Posterior cingulate gyrus (tissue), 11 donors: ENCODE measurements at regions of chr1 and their contacts with region 1.

Region 1: DNA sequence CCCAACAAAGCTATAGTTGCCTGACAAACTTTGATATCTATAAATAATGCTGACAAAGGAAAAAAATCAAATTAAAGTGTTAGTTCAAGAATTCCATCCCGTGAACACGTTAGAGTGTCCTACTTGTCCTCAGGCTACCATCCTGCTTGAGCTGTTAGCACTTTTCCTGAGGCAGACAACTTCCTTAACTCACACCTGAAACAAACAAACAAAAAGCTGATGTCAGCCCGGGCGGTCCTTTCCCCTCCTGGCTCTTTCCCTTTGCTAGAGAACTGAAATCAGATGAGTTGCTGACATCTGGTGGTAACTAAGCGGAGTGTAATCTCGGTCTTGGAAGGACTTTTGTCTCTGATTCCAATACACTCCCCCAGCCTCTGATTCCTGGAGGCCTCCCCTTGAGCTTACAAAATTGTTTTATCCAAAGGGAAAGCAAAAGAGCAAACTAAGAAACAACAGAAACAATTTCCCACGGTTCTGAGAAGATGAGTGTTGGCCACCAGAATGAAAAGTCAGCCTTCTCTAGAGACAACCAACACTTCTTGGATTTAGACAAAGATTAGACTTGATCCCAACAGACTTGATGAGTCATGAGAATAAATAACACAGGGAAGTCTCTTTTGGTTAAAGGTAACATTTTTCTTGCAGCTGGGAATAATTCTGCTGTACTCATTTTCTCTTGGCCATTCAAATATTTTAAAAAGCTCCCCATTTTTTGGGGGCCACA is 135.4 kb downstream of the PROX1 start:
- DNase-seq: peak in 6 of 10 donors; percentile 21 to 90 (median 30)

Region 2: DNA sequence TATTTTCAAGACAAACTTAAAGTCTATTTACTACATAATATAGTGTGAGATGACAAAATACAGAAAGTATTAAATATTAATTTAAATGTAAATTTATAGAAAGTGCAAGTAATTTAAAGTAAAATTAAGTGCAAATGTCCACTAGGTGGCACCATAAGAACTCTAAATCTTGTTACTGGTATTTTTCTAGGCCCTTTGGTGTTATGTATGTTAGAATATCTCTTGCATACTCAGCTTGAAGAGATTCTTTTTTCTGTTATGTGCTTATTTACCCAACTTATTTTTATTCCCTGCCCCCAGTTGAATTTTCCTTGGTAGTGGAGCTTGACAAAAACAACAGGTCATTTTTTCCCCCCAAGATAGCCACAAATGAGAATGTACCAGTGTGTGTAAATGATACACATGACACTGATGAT is 1000.7 kb before region 1 on chr1:
- intact Hi-C with region 1: loop called (anchors 1 kb)
- DNase-seq: no peak

Region 3: GRCh38 chr1:213244664-213245091 is 878.5 kb before region 1 on chr1:
- intact Hi-C with region 1: loop called (anchors 1 kb)
- DNase-seq: peak in 2 of 10 donors; percentile 11 to 32

Region 4: DNA sequence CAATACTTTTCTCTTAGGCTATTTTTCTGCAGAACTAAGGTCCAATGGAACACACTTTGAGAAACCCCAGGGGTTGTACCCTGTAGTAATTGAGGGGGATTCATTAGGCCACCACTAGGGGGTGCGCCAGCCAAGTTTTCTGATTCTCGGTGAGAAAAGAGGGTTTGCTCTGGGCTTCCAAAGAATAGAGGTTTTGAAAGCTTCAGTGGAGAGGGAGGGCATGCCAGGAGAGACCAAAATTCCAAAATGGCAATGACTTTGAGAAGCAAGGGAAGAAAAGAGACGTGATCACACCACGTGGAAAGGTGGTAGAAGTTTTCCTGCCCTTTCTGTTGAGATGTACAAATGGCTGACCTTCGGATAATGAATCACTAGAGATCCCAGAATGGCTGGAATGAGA is 748.9 kb before region 1 on chr1:
- intact Hi-C with region 1: loop called (anchors 1 kb)
- DNase-seq: peak; percentile 43 to 95 (median 74)

Region 5: GRCh38 chr1:213564215-213564659 is 559.0 kb before region 1 on chr1:
- intact Hi-C with region 1: loop called (anchors 10 kb)
- DNase-seq: no peak

Region 6: DNA sequence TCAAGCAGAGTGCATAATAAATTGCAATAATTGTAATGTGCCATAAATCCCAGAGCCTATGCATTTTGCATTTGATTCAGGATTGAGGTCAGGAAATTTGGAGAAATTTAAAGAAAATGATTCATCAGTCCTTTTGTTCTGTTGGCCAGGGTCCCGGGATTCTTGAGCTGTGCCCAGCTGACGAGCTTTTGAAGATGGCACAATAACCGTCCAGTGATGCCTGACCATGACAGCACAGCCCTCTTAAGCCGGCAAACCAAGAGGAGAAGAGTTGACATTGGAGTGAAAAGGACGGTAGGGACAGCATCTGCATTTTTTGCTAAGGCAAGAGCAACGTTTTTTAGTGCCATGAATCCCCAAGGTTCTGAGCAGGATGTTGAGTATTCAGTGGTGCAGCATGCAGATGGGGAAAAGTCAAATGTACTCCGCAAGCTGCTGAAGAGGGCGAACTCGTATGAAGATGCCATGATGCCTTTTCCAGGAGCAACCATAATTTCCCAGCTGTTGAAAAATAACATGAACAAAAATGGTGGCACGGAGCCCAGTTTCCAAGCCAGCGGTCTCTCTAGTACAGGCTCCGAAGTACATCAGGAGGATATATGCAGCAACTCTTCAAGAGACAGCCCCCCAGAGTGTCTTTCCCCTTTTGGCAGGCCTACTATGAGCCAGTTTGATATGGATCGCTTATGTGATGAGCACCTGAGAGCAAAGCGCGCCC is 126.7 kb before region 1 on chr1:
- intact Hi-C with region 1: loop called (anchors 5 kb)
- DNase-seq: peak in 3 of 10 donors; percentile 55 to 90 (median 67)

Region 7: GRCh38 chr1:214029796-214030195 is 93.4 kb before region 1 on chr1:
- intact Hi-C with region 1: loop called (anchors 10 kb)
- DNase-seq: no peak

Region 8: GRCh38 chr1:214271174-214271858 is 148.1 kb after region 1 on chr1:
- intact Hi-C with region 1: no loop called
- DNase-seq: no peak